ENCODE measurements at regions of chr12 and their contacts with region 1.

Region 1: DNA sequence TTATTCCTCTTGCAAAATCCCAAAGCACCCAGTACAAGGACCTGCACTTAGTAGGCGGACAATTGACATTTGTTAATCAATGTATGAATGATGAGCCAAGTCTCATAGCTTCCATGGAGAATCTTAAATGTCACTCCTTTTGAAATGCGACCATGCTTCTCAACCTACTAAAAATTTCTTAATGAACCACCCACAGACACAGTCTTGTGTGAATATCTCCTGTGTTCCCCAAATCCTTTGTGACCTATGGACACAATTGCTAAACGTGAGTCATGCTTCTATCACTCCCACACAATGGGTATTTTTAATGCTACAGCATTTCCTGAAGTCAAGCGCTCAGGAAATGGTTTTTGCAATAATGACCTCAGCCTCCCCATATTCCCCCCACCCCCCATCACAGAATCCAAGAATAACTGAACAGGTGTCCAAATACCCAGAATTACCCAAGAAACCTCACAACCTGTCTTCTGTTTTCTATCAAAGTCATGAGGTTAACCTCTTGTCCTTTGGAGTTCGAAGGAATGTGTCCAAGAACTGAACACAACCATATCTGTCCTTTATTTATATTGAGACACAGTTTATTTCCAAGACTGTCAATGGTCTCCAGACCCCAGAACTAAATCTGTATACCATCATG is 163.6 kb upstream of the PLEKHG7 start:
- DNase-seq: no peak
- ATAC-seq: peak; percentile 32
- H3K4me3 Mint-ChIP-seq: peak overlapping the region; percentile 73
- H3K27ac Mint-ChIP-seq: peak overlapping the region; percentile 97
- H3K4me1 Mint-ChIP-seq: peaks cover 79% of the 10 kb centered on the region
- H3K27me3 Mint-ChIP-seq: no peaks in the 10 kb centered on the region
- CTCF ChIP-seq: no peak

Region 2: DNA sequence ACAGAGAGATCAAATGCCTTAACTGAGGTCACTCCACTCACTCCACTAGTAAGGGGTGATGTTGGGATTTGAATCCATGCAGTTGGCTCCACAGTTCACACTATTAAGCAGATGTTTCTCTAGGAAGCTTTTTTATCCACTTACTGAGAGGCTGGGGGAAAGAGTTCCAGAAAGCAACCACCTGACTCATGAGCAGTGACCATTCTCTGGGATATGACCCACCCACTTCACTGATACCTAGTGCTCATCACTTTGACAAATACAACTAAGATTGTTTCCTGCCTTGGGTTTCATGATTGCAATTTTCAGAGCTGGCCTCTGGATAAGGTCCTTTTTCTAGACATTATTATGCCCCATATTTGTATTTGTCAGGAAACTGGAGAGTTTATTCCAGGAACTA is 11.4 kb after region 1 on chr12:
- CTCF ChIA-PET with region 1: no interaction called
- POLR2A ChIA-PET with region 1: interaction called, 4 read pairs
- intact Hi-C with region 1: loop called (anchors 1 kb)
- DNase-seq: no peak
- ATAC-seq: no peak
- H3K4me3 Mint-ChIP-seq: no peak overlapping the region
- H3K27ac Mint-ChIP-seq: no peak overlapping the region
- H3K4me1 Mint-ChIP-seq: peaks cover 16% of the 10 kb centered on the region
- H3K27me3 Mint-ChIP-seq: no peaks in the 10 kb centered on the region
- CTCF ChIP-seq: no peak

Region 3: GRCh38 chr12:92593734-92594402 is 54.6 kb after region 1 on chr12:
- CTCF ChIA-PET with region 1: no interaction called
- POLR2A ChIA-PET with region 1: no interaction called
- intact Hi-C with region 1: no loop called
- DNase-seq: peak; percentile 49
- ATAC-seq: peak; percentile 92
- H3K4me3 Mint-ChIP-seq: peak overlapping the region; percentile 75
- H3K27ac Mint-ChIP-seq: peak overlapping the region; percentile 96
- H3K4me1 Mint-ChIP-seq: peaks cover 46% of the 10 kb centered on the region
- H3K27me3 Mint-ChIP-seq: no peaks in the 10 kb centered on the region
- CTCF ChIP-seq: no peak

Measured in activated B cell treated with CpG ODN at 0.5 μM for 24 hours (primary cell).